GM12878 (cell line): ENCODE measurements at regions of chr14 and their contacts with region 1.

Region 1: DNA sequence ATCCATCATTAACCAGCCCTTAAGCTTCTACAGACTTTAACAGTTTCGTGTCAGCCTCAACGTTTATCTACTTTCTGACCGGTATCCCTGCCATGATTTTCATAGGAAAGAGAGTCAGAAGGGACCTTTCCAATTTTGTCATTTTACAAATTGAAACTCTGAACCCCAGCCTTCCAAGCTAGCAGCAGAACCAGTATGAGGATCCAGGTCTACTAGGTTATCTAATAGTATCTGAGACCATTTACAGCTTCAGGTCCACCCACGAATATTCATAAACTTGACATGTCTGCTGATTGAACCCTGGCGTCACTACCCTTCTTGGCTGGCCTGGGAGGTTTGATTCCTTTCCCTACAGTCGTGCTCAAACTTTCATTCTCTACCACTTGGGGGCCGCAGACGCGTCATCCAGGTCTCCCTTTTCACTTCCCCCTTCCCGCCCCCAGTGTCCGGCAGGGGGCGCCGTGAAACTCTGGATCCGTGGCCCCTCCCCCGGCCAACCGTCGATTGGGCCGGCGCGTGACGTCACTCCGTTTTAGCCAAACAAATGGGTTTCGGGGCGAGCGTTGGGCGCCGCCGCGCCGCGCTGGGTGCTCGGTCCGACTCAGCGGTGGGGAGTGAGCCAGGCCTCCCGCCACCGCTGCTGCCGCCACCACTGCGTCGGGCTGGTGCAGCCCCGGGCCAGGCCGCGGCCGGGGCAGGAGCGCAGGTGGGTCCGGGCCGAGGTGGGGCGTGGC is at the start of gene FBXO34:
- DNase-seq: peak; percentile 87
- ATAC-seq: peak; percentile 93
- H3K4me3 ChIP-seq: peak within 1 kb of the TSS; percentile 93
- H3K27ac ChIP-seq: peak within 1 kb of the TSS; percentile 88
- H3K4me1 ChIP-seq: peaks cover 26% of the 10 kb centered on the region
- H3K27me3 ChIP-seq: no peaks in the 10 kb centered on the region
- CTCF ChIP-seq: peak; percentile 99 to 100 (median 99); a peak in 5 of 6 replicates
- EP300 ChIP-seq: peak; percentile 59 to 82; a peak in 3 of 4 replicates
- POLR2A ChIP-seq: peak; percentile 86
- RAD21 ChIP-seq: peak; percentile 88
- polyA plus RNA-seq, gene FBXO34: 5.6 to 6.8 TPM

Region 2: GRCh38 chr14:55133416-55133815 is 137.6 kb before region 1 on chr14:
- CTCF ChIA-PET with region 1: no interaction called
- POLR2A ChIA-PET with region 1: no interaction called
- RAD21 ChIA-PET with region 1: no interaction called
- SMC1A ChIA-PET with region 1: no interaction called
- in situ Hi-C with region 1: no loop called
- intact Hi-C with region 1: no loop called
- DNase-seq: no peak
- ATAC-seq: no peak
- H3K4me3 ChIP-seq: no peak overlapping the region
- H3K27ac ChIP-seq: no peak overlapping the region
- H3K4me1 ChIP-seq: no peaks in the 10 kb centered on the region; the same call in 1 of the 2 replicates
- H3K27me3 ChIP-seq: no peaks in the 10 kb centered on the region
- CTCF ChIP-seq: peak in 2 of 3 experiments; percentile 13 to 17; a peak in 1 of 6 replicates
- EP300 ChIP-seq: no peak
- POLR2A ChIP-seq: no peak
- RAD21 ChIP-seq: no peak

Region 3: DNA sequence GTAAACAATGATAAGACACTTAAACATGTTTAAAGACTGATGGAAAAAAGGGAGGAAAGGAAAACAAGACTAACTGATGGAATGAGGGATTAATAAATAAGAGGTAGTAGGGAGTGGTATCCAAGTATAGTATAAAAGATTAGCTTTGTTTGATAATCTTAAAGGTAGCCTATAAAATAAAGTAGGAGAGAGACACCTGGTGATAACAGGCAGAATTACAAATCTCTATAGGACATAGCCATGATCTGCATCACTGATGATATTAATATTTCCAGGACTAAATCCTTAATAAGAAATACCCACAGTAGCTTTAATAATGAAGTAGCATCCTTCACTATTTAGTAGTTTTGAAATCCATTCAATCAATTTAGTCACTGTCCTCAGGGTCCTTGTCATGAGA is 110.0 kb before region 1 on chr14:
- CTCF ChIA-PET with region 1: interaction called, 3 read pairs
- POLR2A ChIA-PET with region 1: interaction called, 11 read pairs
- RAD21 ChIA-PET with region 1: no interaction called
- SMC1A ChIA-PET with region 1: no interaction called
- in situ Hi-C with region 1: no loop called
- intact Hi-C with region 1: no loop called
- DNase-seq: no peak
- ATAC-seq: peak; percentile 65
- H3K4me3 ChIP-seq: no peak overlapping the region
- H3K27ac ChIP-seq: no peak overlapping the region
- H3K4me1 ChIP-seq: no peaks in the 10 kb centered on the region
- H3K27me3 ChIP-seq: no peaks in the 10 kb centered on the region
- CTCF ChIP-seq: peak; percentile 32 to 67 (median 38); a peak in 5 of 6 replicates
- EP300 ChIP-seq: no peak
- POLR2A ChIP-seq: no peak
- RAD21 ChIP-seq: peak; percentile 64

Region 4: GRCh38 chr14:55255979-55256378 is 15.0 kb before region 1 on chr14:
- CTCF ChIA-PET with region 1: interaction called, 10 read pairs
- POLR2A ChIA-PET with region 1: interaction called, 3 read pairs
- RAD21 ChIA-PET with region 1: no interaction called
- SMC1A ChIA-PET with region 1: interaction called, 11 read pairs
- in situ Hi-C with region 1: no loop called
- intact Hi-C with region 1: no loop called
- DNase-seq: no peak
- ATAC-seq: no peak
- H3K4me3 ChIP-seq: no peak overlapping the region
- H3K27ac ChIP-seq: no peak overlapping the region
- H3K4me1 ChIP-seq: no peaks in the 10 kb centered on the region
- H3K27me3 ChIP-seq: no peaks in the 10 kb centered on the region; a peak in 2 of 4 replicates
- CTCF ChIP-seq: no peak
- EP300 ChIP-seq: no peak
- POLR2A ChIP-seq: no peak
- RAD21 ChIP-seq: no peak

Region 5: GRCh38 chr14:55333711-55334485 is 62.9 kb after region 1 on chr14:
- CTCF ChIA-PET with region 1: interaction called, 18 read pairs
- POLR2A ChIA-PET with region 1: interaction called, 5 read pairs
- RAD21 ChIA-PET with region 1: interaction called, 20 read pairs
- SMC1A ChIA-PET with region 1: interaction called, 18 read pairs
- in situ Hi-C with region 1: no loop called
- intact Hi-C with region 1: loop called (anchors 2 kb)
- DNase-seq: no peak
- ATAC-seq: peak; percentile 81
- H3K4me3 ChIP-seq: no peak overlapping the region
- H3K27ac ChIP-seq: peak overlapping the region; percentile 71; the same call in 1 of the 2 replicates
- H3K4me1 ChIP-seq: peaks cover 26% of the 10 kb centered on the region
- H3K27me3 ChIP-seq: no peaks in the 10 kb centered on the region
- CTCF ChIP-seq: no peak
- EP300 ChIP-seq: no peak
- POLR2A ChIP-seq: no peak
- RAD21 ChIP-seq: no peak

Region 6: DNA sequence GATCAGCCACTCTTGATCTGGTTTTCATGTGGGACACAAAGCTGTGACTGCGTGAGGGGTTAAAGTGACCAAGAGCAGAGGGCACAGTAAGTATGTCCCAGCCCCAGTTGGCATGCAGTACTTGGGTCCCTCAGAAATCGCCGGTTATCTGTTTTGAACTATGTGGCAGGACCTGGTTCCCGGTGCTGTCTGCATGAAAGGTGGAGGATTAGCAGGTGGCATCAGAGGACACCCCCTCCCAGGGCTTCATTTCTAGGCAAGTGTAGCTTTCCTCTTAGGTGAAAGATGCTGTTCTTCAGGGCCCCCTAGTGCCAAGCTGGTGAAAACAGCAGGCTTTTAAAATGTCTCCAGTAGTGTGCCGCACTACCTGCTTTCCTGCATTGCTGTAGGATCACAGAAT is 83.5 kb after region 1 on chr14:
- CTCF ChIA-PET with region 1: interaction called, 255 read pairs
- POLR2A ChIA-PET with region 1: interaction called, 6 read pairs
- RAD21 ChIA-PET with region 1: interaction called, 65 read pairs
- SMC1A ChIA-PET with region 1: interaction called, 161 read pairs
- in situ Hi-C with region 1: loop called (anchors 5 kb)
- intact Hi-C with region 1: loop called (anchors 1 kb)
- DNase-seq: no peak
- ATAC-seq: peak; percentile 97
- H3K4me3 ChIP-seq: no peak overlapping the region
- H3K27ac ChIP-seq: no peak overlapping the region
- H3K4me1 ChIP-seq: peaks cover 2% of the 10 kb centered on the region
- H3K27me3 ChIP-seq: no peaks in the 10 kb centered on the region
- CTCF ChIP-seq: peak; percentile 70 to 85 (median 72)
- EP300 ChIP-seq: no peak
- POLR2A ChIP-seq: no peak
- RAD21 ChIP-seq: peak; percentile 93